HAP-1 (cell line): ENCODE measurements at regions of chr4 and their contacts with region 1.

Region 1: GRCh38 chr4:87235020-87235671 is 14.7 kb upstream of the KLHL8 start:
- DNase-seq: no peak
- H3K4me3 ChIP-seq: no peak overlapping the region
- H3K4me1 ChIP-seq: no peaks in the 10 kb centered on the region
- H3K27me3 ChIP-seq: no peaks in the 10 kb centered on the region; the same call in 1 of the 2 replicates

Region 2: DNA sequence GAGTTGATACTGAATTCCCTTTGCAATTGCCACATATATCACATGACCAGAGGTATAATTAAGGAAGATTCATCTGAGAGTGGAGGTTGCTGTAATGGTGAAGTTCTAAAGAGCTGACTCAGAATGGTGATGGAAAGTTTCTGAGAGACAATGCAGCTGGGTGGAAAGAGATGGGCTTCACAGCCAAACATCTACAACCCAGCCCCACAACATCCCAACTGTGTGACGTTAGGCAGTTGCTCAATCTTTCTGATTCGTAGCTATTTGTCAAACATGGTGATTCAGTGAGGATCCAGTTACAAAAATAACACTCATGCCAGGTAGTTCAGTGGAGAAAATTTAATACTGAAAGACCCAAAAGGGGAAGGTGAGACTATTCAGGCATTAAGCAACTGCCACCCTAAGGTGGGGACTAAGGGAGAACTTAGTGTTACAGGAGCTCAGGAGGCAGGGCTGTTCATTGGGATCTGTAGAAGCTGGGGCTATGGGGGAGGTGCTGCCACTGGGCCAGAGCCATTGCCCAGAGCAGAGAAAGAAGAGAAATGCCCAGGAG is 307.2 kb before region 1 on chr4:
- in situ Hi-C with region 1: loop called (anchors 10 kb)
- DNase-seq: no peak
- H3K4me3 ChIP-seq: no peak overlapping the region
- H3K4me1 ChIP-seq: no peaks in the 10 kb centered on the region
- H3K27me3 ChIP-seq: no peaks in the 10 kb centered on the region

Region 3: GRCh38 chr4:87144356-87144755 is 90.8 kb before region 1 on chr4:
- in situ Hi-C with region 1: loop called (anchors 10 kb)
- DNase-seq: no peak
- H3K4me3 ChIP-seq: no peak overlapping the region
- H3K4me1 ChIP-seq: no peaks in the 10 kb centered on the region
- H3K27me3 ChIP-seq: no peaks in the 10 kb centered on the region